Astrocyte of the spinal cord (primary cell): ENCODE measurements at regions of chr2 and their contacts with region 1.

Region 1: GRCh38 chr2:11688222-11689069 is 18.5 kb upstream of the NTSR2 start:
- DNase-seq: peak; percentile 65
- H3K4me3 ChIP-seq: peak overlapping the region; percentile 6
- CTCF ChIP-seq: peak; percentile 84

Region 2: DNA sequence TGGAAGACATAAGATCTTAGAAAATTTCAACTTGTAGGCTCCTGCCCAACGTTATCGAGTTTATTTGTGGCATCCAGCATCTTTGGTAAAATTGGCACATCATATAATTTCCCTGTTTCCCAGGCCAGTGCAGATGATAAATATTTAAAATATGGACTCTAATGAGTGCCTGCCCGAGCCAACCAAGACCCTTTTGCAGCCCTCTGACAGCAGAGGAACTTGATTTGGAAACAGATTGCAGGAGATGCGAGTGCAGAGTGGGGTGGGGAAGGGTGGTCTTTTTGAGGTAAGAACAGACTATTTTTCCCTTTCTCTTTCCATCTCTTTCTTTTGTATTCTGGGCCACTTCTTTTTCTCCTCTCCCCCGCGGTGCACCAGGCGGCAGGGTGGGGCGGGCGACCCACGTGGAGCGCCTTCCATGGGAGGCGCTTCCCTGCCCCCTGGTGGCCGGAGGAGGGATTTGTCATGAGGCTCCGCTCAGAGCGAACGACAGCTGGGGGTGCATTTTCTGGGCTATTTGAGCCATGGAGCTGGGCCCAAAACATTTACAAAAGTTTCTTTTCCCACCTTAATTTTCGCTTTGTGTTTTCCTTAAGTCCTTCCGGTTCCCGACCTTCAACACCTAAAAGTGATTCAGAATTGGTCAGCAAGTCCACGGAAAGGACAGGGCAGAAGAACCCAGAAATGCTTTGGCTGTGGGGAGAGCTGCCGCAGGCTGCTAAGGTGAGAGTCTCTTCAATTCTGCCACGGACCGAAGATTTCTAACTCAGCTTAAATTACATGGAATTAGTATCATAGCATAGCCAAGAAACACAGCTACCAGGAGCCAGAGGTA is 90.7 kb after region 1 on chr2:
- in situ Hi-C with region 1: loop called (anchors 25 kb)
- DNase-seq: peak; percentile 67
- H3K4me3 ChIP-seq: no peak overlapping the region
- CTCF ChIP-seq: peak; percentile 87